ENCODE measurements at regions of chr1 and their contacts with region 1.

Region 1: DNA sequence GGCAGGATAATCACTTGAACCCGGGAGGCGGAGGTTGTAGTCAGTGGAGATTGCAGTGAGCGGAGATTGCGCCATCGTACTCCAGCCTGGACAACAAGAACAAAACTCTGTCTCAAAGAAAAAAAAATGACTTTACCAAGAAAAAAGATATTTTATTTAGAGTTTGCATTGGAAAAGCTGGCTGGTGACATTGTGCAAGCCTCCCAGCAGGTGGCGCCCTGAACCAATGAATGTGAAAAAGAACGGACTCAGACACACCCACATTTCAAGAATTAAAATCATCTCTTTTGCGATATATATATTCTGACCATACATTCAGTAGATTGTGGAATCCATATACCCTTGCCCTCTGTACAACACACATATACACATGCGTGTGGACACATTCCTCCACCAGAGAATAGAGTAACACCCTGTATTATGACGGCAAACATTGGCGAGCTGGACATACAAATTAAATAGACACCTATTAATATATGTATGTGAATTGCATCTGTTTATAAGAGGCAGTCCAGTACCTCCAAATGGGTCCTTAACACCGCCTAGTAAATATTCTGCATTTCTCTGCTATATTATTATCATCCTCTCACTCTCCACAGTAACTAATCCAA is 39.0 kb upstream of the CADM3 start:
- DNase-seq: peak; percentile 71
- ATAC-seq: peak; percentile 55
- H3K4me3 Mint-ChIP-seq: no peak overlapping the region
- H3K27ac Mint-ChIP-seq: no peak overlapping the region
- H3K4me1 Mint-ChIP-seq: no peaks in the 10 kb centered on the region
- H3K27me3 Mint-ChIP-seq: peaks cover 4% of the 10 kb centered on the region
- CTCF ChIP-seq: peak; percentile 88

Region 2: DNA sequence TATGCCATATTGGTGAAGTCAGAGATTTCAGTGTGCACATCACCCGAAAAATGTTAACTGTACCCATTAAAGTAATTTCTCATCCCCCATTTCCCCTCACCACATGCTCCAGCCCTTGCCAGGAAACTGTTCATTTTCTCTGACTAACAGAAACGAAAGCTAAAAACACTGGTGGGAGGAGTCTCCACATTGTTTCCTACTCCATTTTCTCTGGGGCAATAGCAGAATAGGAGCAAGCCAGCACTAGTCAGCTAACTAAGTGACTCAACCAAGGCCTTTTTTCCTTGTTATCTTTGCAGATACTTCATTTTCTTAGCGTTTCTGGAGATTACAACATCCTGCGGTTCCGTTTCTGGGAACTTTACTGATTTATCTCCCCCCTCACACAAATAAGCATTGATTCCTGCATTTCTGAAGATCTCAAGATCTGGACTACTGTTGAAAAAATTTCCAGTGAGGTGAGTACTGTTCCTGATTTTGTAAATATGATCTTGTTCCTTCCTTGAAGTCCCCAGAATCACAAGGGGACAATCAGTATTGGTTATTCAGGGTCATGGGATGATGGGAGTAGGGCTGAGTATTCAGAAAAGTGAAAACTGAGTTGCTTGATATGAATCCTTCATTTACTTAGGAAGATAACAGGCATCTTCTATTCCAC is 122.5 kb before region 1 on chr1 and contains the start of gene IFI16:
- CTCF ChIA-PET with region 1: no interaction called
- POLR2A ChIA-PET with region 1: no interaction called
- intact Hi-C with region 1: no loop called
- DNase-seq: peak; percentile 72
- ATAC-seq: peak; percentile 68
- H3K4me3 Mint-ChIP-seq: peak within 1 kb of the TSS; percentile 83
- H3K27ac Mint-ChIP-seq: peak within 1 kb of the TSS; percentile 96
- H3K4me1 Mint-ChIP-seq: peaks cover 33% of the 10 kb centered on the region
- H3K27me3 Mint-ChIP-seq: no peaks in the 10 kb centered on the region
- CTCF ChIP-seq: no peak
- total RNA-seq, gene IFI16: 190 to 199 TPM

Region 3: DNA sequence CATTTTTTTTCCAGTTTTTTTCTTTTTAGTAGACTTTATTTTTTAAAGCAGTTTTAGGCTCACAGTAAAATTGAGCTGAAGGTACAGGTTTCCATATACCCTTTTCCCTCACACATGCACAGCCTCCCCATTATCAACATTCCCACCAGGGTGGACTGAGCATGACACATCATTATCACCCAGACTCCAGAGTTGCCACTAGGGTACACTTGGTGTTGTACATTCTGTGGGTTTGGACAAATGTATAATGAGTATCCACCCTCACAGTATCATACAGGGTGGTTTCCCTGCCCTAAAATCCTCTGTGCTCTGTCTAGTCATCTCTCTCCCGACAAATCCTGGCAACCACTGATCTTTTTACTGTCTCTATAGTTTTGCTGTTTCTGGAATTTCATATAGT is 52.9 kb before region 1 on chr1:
- CTCF ChIA-PET with region 1: no interaction called
- POLR2A ChIA-PET with region 1: no interaction called
- intact Hi-C with region 1: no loop called
- DNase-seq: no peak
- ATAC-seq: no peak
- H3K4me3 Mint-ChIP-seq: no peak overlapping the region
- H3K27ac Mint-ChIP-seq: no peak overlapping the region
- H3K4me1 Mint-ChIP-seq: peaks cover 22% of the 10 kb centered on the region
- H3K27me3 Mint-ChIP-seq: no peaks in the 10 kb centered on the region
- CTCF ChIP-seq: no peak

Region 4: GRCh38 chr1:159122005-159122621 is 10.3 kb before region 1 on chr1:
- CTCF ChIA-PET with region 1: interaction called, 20 read pairs
- POLR2A ChIA-PET with region 1: no interaction called
- intact Hi-C with region 1: no loop called
- DNase-seq: no peak
- ATAC-seq: no peak
- H3K4me3 Mint-ChIP-seq: no peak overlapping the region
- H3K27ac Mint-ChIP-seq: no peak overlapping the region
- H3K4me1 Mint-ChIP-seq: peaks cover 3% of the 10 kb centered on the region
- H3K27me3 Mint-ChIP-seq: peaks cover 31% of the 10 kb centered on the region
- CTCF ChIP-seq: no peak

Region 5: GRCh38 chr1:159161001-159161718 is 28.8 kb after region 1 on chr1:
- CTCF ChIA-PET with region 1: interaction called, 23 read pairs
- POLR2A ChIA-PET with region 1: no interaction called
- intact Hi-C with region 1: no loop called
- DNase-seq: peak; percentile 68
- ATAC-seq: peak; percentile 80
- H3K4me3 Mint-ChIP-seq: no peak overlapping the region
- H3K27ac Mint-ChIP-seq: no peak overlapping the region
- H3K4me1 Mint-ChIP-seq: peaks cover 4% of the 10 kb centered on the region
- H3K27me3 Mint-ChIP-seq: peaks cover 35% of the 10 kb centered on the region
- CTCF ChIP-seq: peak; percentile 95

Region 6: GRCh38 chr1:159197561-159198557 is 65.5 kb after region 1 on chr1:
- CTCF ChIA-PET with region 1: interaction called, 54 read pairs
- POLR2A ChIA-PET with region 1: no interaction called
- intact Hi-C with region 1: no loop called
- DNase-seq: peak; percentile 76
- ATAC-seq: peak; percentile 86
- H3K4me3 Mint-ChIP-seq: no peak overlapping the region
- H3K27ac Mint-ChIP-seq: no peak overlapping the region
- H3K4me1 Mint-ChIP-seq: peaks cover 16% of the 10 kb centered on the region
- H3K27me3 Mint-ChIP-seq: peaks cover 30% of the 10 kb centered on the region
- CTCF ChIP-seq: peak; percentile 80

Region 7: GRCh38 chr1:159204161-159205141 is 72.1 kb after region 1 on chr1 and contains the start of gene ACKR1:
- CTCF ChIA-PET with region 1: interaction called, 202 read pairs
- POLR2A ChIA-PET with region 1: interaction called, 3 read pairs
- intact Hi-C with region 1: no loop called
- DNase-seq: no peak
- ATAC-seq: no peak
- H3K4me3 Mint-ChIP-seq: no peak within 1 kb of the TSS
- H3K27ac Mint-ChIP-seq: no peak within 1 kb of the TSS
- H3K4me1 Mint-ChIP-seq: peaks cover 28% of the 10 kb centered on the region
- H3K27me3 Mint-ChIP-seq: peaks cover 47% of the 10 kb centered on the region
- CTCF ChIP-seq: no peak
- total RNA-seq, gene ACKR1: not detected

Measured in activated CD8-positive, alpha-beta T cell treated with anti-CD3 and anti-CD28 coated beads for 36 hours (primary cell).